Left colon (tissue), 2 donors: ENCODE measurements at regions of chr7 and their contacts with region 1.

Region 1: DNA sequence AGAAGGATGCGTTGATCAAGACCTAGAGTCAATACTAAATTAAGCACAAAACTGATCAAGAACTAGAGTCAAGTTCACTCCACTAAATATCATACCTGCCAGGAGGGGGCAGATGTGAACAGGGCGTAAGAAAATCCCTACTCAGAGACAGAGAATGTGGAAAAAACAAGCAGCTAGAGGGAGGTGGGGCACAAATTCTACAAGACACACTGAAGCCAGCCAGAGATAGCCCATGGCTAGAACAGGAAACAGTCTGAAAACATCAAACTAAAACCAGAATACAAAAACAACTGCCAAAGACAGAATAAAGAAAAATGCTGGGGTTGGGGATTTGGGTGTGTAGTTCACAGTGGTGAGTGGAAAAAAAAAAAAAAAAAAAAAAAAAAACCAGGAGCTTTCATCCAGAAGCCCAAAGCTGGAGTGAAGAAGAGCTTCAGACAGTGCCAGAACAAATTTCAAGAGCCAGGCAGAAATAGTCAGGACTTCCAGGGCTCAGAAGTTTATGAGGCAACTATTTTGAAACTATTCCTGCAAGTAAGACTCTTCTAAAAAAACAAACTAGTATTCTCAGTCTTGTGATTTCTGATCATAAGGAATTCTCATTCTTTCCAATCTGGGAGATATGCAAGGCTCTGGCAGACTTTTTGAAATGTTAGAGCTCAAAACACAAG is 118.3 kb downstream of the CCDC71L start:
- DNase-seq: peak; percentile 57 to 73
- ATAC-seq: peak; percentile 100

Region 2: DNA sequence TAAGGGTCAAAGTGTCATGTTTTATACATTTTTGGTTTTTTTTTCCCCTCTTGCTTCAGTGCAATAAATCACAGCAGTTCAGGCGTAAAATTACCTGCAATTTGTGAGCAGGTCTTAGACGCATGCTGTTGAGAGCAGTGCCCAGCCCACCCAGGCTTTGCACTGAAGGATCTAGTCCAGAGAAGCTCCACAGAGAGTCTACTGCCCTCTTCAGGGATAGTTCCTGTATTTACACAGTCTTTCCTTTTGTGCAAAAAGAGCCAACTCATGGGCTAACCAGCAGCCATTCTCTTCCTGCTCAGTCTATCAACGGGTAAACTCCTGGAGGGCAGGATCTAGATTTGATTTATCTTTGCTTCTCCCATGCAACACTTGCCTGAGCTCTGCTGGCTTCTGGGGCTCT is 175.7 kb before region 1 on chr7:
- intact Hi-C with region 1: no loop called
- DNase-seq: peak in 1 of 2 donors; percentile 19
- ATAC-seq: peak; percentile 56

Region 3: GRCh38 chr7:106583101-106583500 is 40.4 kb after region 1 on chr7:
- intact Hi-C with region 1: no loop called
- DNase-seq: no peak
- ATAC-seq: no peak

Region 4: GRCh38 chr7:106659963-106660861 is 117.5 kb after region 1 on chr7:
- intact Hi-C with region 1: loop called in 1 of 2 experiments (anchors 5 kb)
- DNase-seq: peak; percentile 78 to 91
- ATAC-seq: peak; percentile 82

Region 5: DNA sequence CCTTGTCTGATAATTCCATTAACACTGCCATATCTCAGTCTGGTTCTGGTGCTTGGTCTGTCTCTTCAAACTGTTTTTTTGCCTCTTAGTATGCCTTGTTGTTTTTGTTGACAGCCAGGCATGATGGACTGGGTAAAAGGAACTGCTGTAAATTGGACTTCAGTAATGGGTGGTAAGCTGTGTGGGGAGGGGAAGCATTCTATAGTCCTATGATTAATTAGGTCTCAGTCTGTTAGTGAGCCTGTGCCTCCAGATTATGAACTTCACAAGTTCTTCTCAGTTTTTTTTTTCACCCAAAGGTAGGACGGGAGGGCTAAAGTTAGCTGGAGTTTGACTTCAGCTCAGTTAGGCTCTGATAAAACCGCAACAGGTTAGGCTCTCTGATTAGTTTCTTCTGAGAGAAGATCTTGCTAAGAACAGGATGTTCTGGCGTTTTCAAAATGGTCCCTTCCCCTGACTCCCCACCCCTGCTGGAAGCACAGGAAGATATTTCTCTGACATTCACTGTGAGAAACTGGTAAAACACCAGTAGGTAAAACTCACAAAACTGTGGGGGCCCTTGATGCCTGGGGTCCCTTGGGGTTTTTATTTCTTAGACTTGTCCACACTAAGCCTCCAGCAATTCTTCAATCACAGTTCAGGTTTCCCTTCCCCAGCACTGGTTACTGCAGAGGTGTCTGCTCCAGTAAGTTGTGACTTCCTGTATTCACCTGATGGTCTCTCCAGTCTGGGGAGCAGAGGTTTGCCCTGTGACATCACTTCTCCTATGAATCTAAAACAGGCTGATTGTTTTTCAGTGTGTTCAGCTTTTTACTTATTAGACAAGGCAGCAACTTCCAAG is 161.5 kb after region 1 on chr7:
- intact Hi-C with region 1: no loop called
- DNase-seq: no peak
- ATAC-seq: no peak